CD8-positive, alpha-beta T cell (primary cell): ENCODE measurements at regions of chr4 and their contacts with region 1.

Region 1: GRCh38 chr4:39970671-39971640 is 6.8 kb downstream of the PDS5A start:
- DNase-seq: no peak
- ATAC-seq: no peak
- H3K4me3 ChIP-seq: no peak overlapping the region
- H3K4me3 Mint-ChIP-seq: peak overlapping the region; percentile 50
- H3K27ac ChIP-seq: no peak overlapping the region
- H3K27ac Mint-ChIP-seq: peak overlapping the region; percentile 80
- H3K4me1 ChIP-seq: peaks cover 35% of the 10 kb centered on the region
- H3K4me1 Mint-ChIP-seq: peaks cover 61% of the 10 kb centered on the region
- H3K27me3 ChIP-seq: no peaks in the 10 kb centered on the region
- H3K27me3 Mint-ChIP-seq: no peaks in the 10 kb centered on the region
- CTCF ChIP-seq: no peak

Region 2: DNA sequence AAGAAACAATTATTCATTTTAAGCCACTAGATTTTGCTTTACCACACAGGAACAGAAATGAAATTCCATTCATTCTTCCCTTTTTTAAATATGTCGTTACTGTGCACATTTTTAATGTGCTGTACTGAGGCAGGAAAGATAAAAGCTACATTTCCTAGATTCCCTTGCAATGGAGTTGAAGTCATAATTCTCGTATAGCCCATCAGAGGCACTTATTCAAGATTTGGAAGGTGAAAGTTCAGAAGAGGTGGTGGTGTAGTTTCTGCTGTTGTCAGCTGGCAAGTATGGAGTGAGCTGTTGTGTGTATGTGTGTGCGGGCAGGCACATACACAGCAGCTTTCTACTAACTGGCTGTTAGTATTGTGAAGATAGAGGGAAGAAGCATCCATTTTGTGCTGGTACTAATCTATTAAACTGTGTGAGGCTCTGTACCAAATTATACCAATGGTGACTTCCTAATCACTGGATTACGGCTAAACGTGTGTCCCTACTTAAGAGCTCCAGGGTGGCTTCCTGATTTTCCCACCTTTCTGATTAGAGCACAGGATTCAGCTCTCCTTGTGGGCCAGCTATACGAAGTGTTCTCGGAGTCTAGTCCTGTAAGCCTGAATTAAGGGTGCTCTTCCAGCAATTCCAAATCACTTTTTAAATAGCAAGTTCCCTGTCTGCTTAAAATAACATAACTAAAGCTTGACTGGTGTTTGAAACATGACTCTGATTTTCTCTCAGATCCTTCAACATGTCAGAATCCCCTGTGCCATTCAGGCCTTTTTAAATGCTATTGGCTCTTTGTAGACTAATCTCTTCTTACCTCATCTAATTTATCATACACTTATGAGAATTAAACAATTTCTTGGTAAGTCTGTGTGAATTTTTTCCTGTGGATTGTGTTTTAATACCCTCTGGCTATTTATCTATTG is 37.0 kb before region 1 on chr4:
- CTCF ChIA-PET with region 1: no interaction called
- POLR2A ChIA-PET with region 1: no interaction called
- intact Hi-C with region 1: loop called in 1 of 2 experiments (anchors 5 kb)
- DNase-seq: peak in 1 of 9 experiments; percentile 8
- ATAC-seq: no peak
- H3K4me3 ChIP-seq: no peak overlapping the region
- H3K4me3 Mint-ChIP-seq: peak overlapping the region; percentile 27
- H3K27ac ChIP-seq: peak overlapping the region in 1 of 2 experiments; percentile 75
- H3K27ac Mint-ChIP-seq: peak overlapping the region; percentile 49
- H3K4me1 ChIP-seq: peaks cover 35% of the 10 kb centered on the region
- H3K4me1 Mint-ChIP-seq: peaks cover 69% of the 10 kb centered on the region
- H3K27me3 ChIP-seq: no peaks in the 10 kb centered on the region
- H3K27me3 Mint-ChIP-seq: no peaks in the 10 kb centered on the region
- CTCF ChIP-seq: no peak